CD8-positive, alpha-beta T cell (primary cell): ENCODE measurements at regions of chr7 and their contacts with region 1.

Region 1: GRCh38 chr7:12322284-12322902 is 81.3 kb downstream of the VWDE start:
- DNase-seq: peak in 3 of 9 experiments; percentile 18 to 58 (median 54)
- ATAC-seq: no peak
- H3K4me3 ChIP-seq: no peak overlapping the region
- H3K4me3 Mint-ChIP-seq: no peak overlapping the region
- H3K27ac ChIP-seq: no peak overlapping the region
- H3K27ac Mint-ChIP-seq: no peak overlapping the region
- H3K4me1 ChIP-seq: no peaks in the 10 kb centered on the region
- H3K4me1 Mint-ChIP-seq: no peaks in the 10 kb centered on the region
- H3K27me3 ChIP-seq: no peaks in the 10 kb centered on the region
- H3K27me3 Mint-ChIP-seq: no peaks in the 10 kb centered on the region
- CTCF ChIP-seq: peak; percentile 93

Region 2: DNA sequence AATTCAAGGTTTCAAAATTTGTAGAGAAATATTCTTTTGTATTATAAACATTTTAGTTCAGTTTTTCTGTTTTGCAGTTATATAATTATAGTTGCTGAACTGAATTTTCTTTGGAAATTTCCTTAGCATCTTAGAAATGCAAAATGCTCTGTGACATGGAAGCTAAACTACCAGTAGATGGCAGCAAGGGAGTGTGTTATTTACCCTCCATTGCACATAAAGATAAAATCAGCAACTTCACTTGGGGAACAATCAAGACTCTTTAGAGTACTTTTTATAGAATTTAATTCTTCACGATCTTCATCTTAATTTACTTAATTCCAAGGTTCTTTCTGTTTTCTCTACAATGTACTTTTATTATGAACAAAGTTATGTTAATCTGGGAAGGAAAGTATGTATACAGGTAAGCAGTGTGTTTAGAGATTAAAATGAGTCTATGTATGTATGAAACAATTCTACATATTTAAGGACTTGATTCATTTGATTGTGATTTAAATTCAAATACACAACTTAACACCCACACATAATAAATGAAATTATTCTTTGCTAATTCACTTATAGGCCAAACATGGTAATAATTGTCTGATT is 894.6 kb before region 1 on chr7:
- CTCF ChIA-PET with region 1: no interaction called
- POLR2A ChIA-PET with region 1: no interaction called
- intact Hi-C with region 1: loop called in 1 of 2 experiments (anchors 5 kb)
- DNase-seq: peak in 2 of 9 experiments; percentile 12 to 28
- ATAC-seq: no peak
- H3K4me3 ChIP-seq: no peak overlapping the region
- H3K4me3 Mint-ChIP-seq: no peak overlapping the region
- H3K27ac ChIP-seq: no peak overlapping the region
- H3K27ac Mint-ChIP-seq: no peak overlapping the region
- H3K4me1 ChIP-seq: no peaks in the 10 kb centered on the region
- H3K4me1 Mint-ChIP-seq: no peaks in the 10 kb centered on the region
- H3K27me3 ChIP-seq: no peaks in the 10 kb centered on the region
- H3K27me3 Mint-ChIP-seq: no peaks in the 10 kb centered on the region
- CTCF ChIP-seq: no peak

Region 3: GRCh38 chr7:11831736-11832495 is 490.5 kb before region 1 on chr7 and contains the start of gene THSD7A:
- CTCF ChIA-PET with region 1: no interaction called
- POLR2A ChIA-PET with region 1: no interaction called
- intact Hi-C with region 1: loop called in 1 of 2 experiments (anchors 10 kb)
- DNase-seq: peak in 2 of 9 experiments; percentile 1 to 5
- ATAC-seq: no peak
- H3K4me3 ChIP-seq: no peak within 1 kb of the TSS
- H3K4me3 Mint-ChIP-seq: no peak within 1 kb of the TSS
- H3K27ac ChIP-seq: no peak within 1 kb of the TSS
- H3K27ac Mint-ChIP-seq: no peak within 1 kb of the TSS
- H3K4me1 ChIP-seq: peaks cover 6% of the 10 kb centered on the region
- H3K4me1 Mint-ChIP-seq: peaks cover 9% of the 10 kb centered on the region
- H3K27me3 ChIP-seq: peaks cover 0 to 3% of the 10 kb centered on the region in 2 experiments
- H3K27me3 Mint-ChIP-seq: peaks cover 25% of the 10 kb centered on the region
- CTCF ChIP-seq: no peak
- total RNA-seq, gene THSD7A: not detected

Region 4: DNA sequence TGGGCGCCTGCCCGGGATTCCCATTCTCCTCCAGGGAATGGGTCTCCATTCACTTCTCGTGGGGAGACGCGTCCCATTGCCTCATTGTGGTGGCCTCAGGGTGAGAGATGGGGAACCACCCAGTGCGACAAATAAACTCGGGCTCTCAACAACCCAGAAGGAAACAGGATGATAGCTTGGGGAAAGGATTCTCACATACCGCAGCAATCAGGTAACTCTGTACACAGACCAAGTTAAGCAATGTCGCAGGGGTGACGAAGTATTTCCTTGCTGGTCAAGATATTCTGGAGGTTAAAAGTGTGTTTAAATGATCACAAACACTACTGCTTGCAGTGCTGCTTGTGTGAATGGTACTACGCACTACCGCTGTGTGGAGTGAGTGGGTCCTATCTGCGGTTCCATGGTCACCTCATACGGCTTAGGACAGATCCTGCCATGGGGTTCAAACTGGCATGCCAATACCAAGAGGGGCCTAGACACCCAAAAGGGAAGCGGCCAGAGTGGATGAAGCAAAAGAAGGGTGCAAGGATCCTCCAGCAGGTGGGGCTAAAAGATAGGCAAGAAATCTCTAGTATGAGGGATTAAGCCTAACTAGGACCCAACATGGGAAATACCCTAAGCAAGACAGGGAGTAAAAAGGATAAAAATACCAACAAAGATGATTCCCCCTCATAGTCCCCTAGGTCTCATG is 255.1 kb before region 1 on chr7:
- CTCF ChIA-PET with region 1: interaction called, 49 read pairs
- POLR2A ChIA-PET with region 1: no interaction called
- intact Hi-C with region 1: loop called (anchors 1 kb)
- DNase-seq: peak; percentile 22 to 76 (median 59)
- ATAC-seq: peak; percentile 61
- H3K4me3 ChIP-seq: no peak overlapping the region
- H3K4me3 Mint-ChIP-seq: no peak overlapping the region
- H3K27ac ChIP-seq: no peak overlapping the region
- H3K27ac Mint-ChIP-seq: no peak overlapping the region
- H3K4me1 ChIP-seq: no peaks in the 10 kb centered on the region
- H3K4me1 Mint-ChIP-seq: no peaks in the 10 kb centered on the region
- H3K27me3 ChIP-seq: no peaks in the 10 kb centered on the region
- H3K27me3 Mint-ChIP-seq: no peaks in the 10 kb centered on the region
- CTCF ChIP-seq: peak; percentile 66

Region 5: GRCh38 chr7:12111422-12112405 is 210.7 kb before region 1 on chr7:
- CTCF ChIA-PET with region 1: interaction called, 4 read pairs
- POLR2A ChIA-PET with region 1: no interaction called
- intact Hi-C with region 1: loop called in 1 of 2 experiments (anchors 1 kb)
- DNase-seq: peak in 4 of 9 experiments; percentile 15 to 55 (median 30)
- ATAC-seq: peak; percentile 46
- H3K4me3 ChIP-seq: peak overlapping the region; percentile 10 to 45
- H3K4me3 Mint-ChIP-seq: peak overlapping the region; percentile 75
- H3K27ac ChIP-seq: no peak overlapping the region
- H3K27ac Mint-ChIP-seq: no peak overlapping the region
- H3K4me1 ChIP-seq: peaks cover 10% of the 10 kb centered on the region
- H3K4me1 Mint-ChIP-seq: peaks cover 11% of the 10 kb centered on the region
- H3K27me3 ChIP-seq: peaks cover 5 to 7% of the 10 kb centered on the region in 2 experiments
- H3K27me3 Mint-ChIP-seq: peaks cover 35% of the 10 kb centered on the region
- CTCF ChIP-seq: no peak